Activated CD4-positive, alpha-beta T cell treated with anti-CD3 and anti-CD28 coated beads for 36 hours (primary cell): ENCODE measurements at regions of chr9 and their contacts with region 1.

Region 1: GRCh38 chr9:125241000-125241862 is at the start of gene HSPA5:
- DNase-seq: peak; percentile 100
- ATAC-seq: peak; percentile 89
- H3K4me3 Mint-ChIP-seq: peak within 1 kb of the TSS; percentile 90
- H3K27ac Mint-ChIP-seq: peak within 1 kb of the TSS; percentile 96
- H3K4me1 Mint-ChIP-seq: peaks cover 50% of the 10 kb centered on the region
- H3K27me3 Mint-ChIP-seq: no peaks in the 10 kb centered on the region
- total RNA-seq, gene HSPA5: 179 to 188 TPM

Region 2: GRCh38 chr9:124812401-124813016 is 428.7 kb before region 1 on chr9:
- CTCF ChIA-PET with region 1: no interaction called
- POLR2A ChIA-PET with region 1: no interaction called
- intact Hi-C with region 1: no loop called
- DNase-seq: peak; percentile 27
- ATAC-seq: no peak
- H3K4me3 Mint-ChIP-seq: no peak overlapping the region
- H3K27ac Mint-ChIP-seq: no peak overlapping the region
- H3K4me1 Mint-ChIP-seq: no peaks in the 10 kb centered on the region
- H3K27me3 Mint-ChIP-seq: no peaks in the 10 kb centered on the region

Region 3: DNA sequence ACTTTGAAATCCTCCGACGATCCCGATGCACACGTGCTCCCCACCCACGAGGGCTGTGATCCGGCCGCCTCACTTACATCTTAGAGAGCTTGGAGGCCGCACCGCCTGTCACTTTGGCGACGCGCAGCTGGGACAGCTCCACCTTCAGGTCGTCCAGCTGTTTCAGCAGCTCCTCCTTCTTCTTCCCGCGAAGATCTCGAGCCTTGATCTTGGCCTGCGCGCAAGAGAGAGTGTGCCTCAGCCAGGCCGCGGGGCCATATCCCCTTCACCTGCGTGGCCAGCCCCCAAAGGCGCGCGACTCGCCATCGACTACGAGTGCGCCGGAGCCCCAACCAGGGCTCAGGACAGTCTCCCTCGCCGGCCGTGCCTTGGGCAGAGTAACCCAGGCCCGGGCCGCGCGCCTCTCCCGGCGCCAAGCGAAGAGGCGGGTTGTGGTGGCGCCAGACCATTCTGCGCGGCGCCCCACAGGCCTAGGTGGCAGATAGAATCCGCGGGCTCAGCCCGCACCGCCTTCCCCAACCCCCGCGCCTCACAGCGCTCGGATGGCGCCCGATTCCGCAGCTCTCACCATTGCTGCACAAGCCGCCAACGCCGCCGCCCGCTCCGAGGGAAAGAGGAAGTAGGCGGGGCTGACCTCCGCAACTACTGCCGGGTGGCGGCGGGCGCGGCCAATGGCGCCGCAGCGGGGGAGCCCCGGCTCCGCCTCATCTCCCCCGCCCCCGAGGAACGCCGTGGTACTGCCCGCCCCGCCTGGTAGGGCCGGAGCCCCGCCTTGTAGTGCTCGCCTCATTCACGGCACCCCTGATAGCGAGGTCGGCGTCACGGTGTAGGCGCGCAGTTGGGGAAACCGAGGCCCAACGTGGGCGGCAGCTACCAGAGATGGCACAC is 379.6 kb before region 1 on chr9 and contains the starts of genes ARPC5L and RPL35:
- CTCF ChIA-PET with region 1: interaction called, 3 read pairs
- POLR2A ChIA-PET with region 1: interaction called, 5 read pairs
- intact Hi-C with region 1: loop called in 1 of 2 experiments (anchors 1 kb)
- DNase-seq: peak; percentile 98
- ATAC-seq: peak; percentile 95
- H3K4me3 Mint-ChIP-seq: peak within 1 kb of the TSS; percentile 95
- H3K27ac Mint-ChIP-seq: peak within 1 kb of the TSS; percentile 95
- H3K4me1 Mint-ChIP-seq: peaks cover 46% of the 10 kb centered on the region
- H3K27me3 Mint-ChIP-seq: no peaks in the 10 kb centered on the region
- total RNA-seq, gene ARPC5L: 51.9 to 95.9 TPM
- total RNA-seq, gene RPL35: 2,227 to 2,561 TPM

Region 4: GRCh38 chr9:125143375-125144090 is 97.7 kb before region 1 on chr9 and contains the start of gene SCAI:
- CTCF ChIA-PET with region 1: interaction called, 3 read pairs
- POLR2A ChIA-PET with region 1: no interaction called
- intact Hi-C with region 1: loop called in 1 of 2 experiments (anchors 1 kb)
- DNase-seq: peak; percentile 99
- ATAC-seq: peak; percentile 100
- H3K4me3 Mint-ChIP-seq: peak within 1 kb of the TSS; percentile 83
- H3K27ac Mint-ChIP-seq: peak within 1 kb of the TSS; percentile 69
- H3K4me1 Mint-ChIP-seq: peaks cover 35% of the 10 kb centered on the region
- H3K27me3 Mint-ChIP-seq: no peaks in the 10 kb centered on the region
- total RNA-seq, gene SCAI: 13.0 to 13.8 TPM

Region 5: GRCh38 chr9:125261501-125262293 is 20.5 kb after region 1 on chr9 and contains the start of gene GAPVD1:
- CTCF ChIA-PET with region 1: interaction called, 12 read pairs
- POLR2A ChIA-PET with region 1: interaction called, 20 read pairs
- intact Hi-C with region 1: loop called (anchors 1 kb)
- DNase-seq: peak; percentile 94
- ATAC-seq: peak; percentile 99
- H3K4me3 Mint-ChIP-seq: peak within 1 kb of the TSS; percentile 99
- H3K27ac Mint-ChIP-seq: peak within 1 kb of the TSS; percentile 96
- H3K4me1 Mint-ChIP-seq: peaks cover 43% of the 10 kb centered on the region
- H3K27me3 Mint-ChIP-seq: no peaks in the 10 kb centered on the region
- total RNA-seq, gene GAPVD1: 41.6 to 47.7 TPM

Region 6: GRCh38 chr9:125374443-125375309 is 133.4 kb after region 1 on chr9:
- CTCF ChIA-PET with region 1: no interaction called
- POLR2A ChIA-PET with region 1: no interaction called
- intact Hi-C with region 1: loop called in 1 of 2 experiments (anchors 1 kb)
- DNase-seq: peak; percentile 85
- ATAC-seq: peak; percentile 97
- H3K4me3 Mint-ChIP-seq: peak overlapping the region; percentile 26
- H3K27ac Mint-ChIP-seq: no peak overlapping the region
- H3K4me1 Mint-ChIP-seq: peaks cover 2% of the 10 kb centered on the region
- H3K27me3 Mint-ChIP-seq: no peaks in the 10 kb centered on the region